ENCODE measurements at regions of chr1 and their contacts with region 1.

Region 1: DNA sequence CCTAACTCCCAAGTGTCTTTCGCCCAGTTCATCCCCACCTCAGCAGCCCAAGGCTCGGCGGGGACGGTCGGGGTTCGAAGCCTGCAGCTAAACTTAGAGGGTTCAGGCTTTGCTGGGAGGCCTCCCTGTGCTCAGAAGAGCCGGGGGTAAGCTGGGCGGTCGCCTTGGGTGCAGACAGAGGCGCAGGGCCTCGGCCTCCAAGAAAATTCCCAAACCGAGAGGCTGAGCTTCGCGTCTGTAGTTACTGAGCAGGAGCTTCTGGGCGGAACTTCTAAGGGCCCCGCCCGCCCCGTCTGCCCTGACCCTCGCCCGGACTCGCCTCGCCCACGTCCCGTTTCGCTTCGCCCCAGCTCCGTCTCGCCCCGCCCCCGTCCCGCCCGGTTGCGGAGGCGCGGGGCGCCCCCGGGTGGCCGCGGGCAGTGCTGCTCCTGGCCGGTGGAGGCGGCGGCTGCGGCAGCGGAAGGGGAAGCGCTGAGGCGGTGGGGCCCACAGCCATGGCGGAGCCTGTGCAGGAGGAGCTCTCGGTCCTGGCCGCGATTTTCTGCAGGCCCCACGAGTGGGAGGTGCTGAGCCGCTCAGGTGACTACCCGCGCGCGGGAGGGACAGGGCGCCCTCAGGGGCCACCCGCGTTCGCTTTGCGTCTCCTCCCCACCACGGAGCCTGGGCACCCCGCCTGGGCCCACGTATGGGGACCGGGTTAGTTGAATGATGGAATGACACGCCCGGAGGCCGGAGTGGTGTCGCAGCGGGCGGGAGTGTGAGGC is at the start of gene RWDD3:
- DNase-seq: peak; percentile 91
- ATAC-seq: peak; percentile 92
- H3K4me3 Mint-ChIP-seq: peak within 1 kb of the TSS; percentile 87
- H3K27ac Mint-ChIP-seq: peak within 1 kb of the TSS; percentile 64
- H3K4me1 Mint-ChIP-seq: peaks cover 18% of the 10 kb centered on the region
- H3K27me3 Mint-ChIP-seq: no peaks in the 10 kb centered on the region; the same call in none of the 2 replicates
- CTCF ChIP-seq: peak; percentile 72
- total RNA-seq, gene RWDD3: 13.7 to 17.4 TPM (median 13.9 TPM) in 3 replicates

Region 2: GRCh38 chr1:95043141-95043980 is 190.6 kb before region 1 on chr1:
- CTCF ChIA-PET with region 1: interaction called, 23 read pairs
- POLR2A ChIA-PET with region 1: no interaction called
- DNase-seq: peak; percentile 87
- ATAC-seq: peak; percentile 95
- H3K4me3 Mint-ChIP-seq: no peak overlapping the region
- H3K27ac Mint-ChIP-seq: no peak overlapping the region
- H3K4me1 Mint-ChIP-seq: no peaks in the 10 kb centered on the region
- H3K27me3 Mint-ChIP-seq: no peaks in the 10 kb centered on the region
- CTCF ChIP-seq: peak; percentile 97

Region 3: GRCh38 chr1:95067062-95067461 is 166.9 kb before region 1 on chr1:
- CTCF ChIA-PET with region 1: no interaction called
- POLR2A ChIA-PET with region 1: no interaction called
- DNase-seq: no peak
- ATAC-seq: no peak
- H3K4me3 Mint-ChIP-seq: no peak overlapping the region
- H3K27ac Mint-ChIP-seq: no peak overlapping the region
- H3K4me1 Mint-ChIP-seq: peaks cover 3% of the 10 kb centered on the region
- H3K27me3 Mint-ChIP-seq: no peaks in the 10 kb centered on the region
- CTCF ChIP-seq: no peak

Region 4: GRCh38 chr1:95084317-95085176 is 149.4 kb before region 1 on chr1:
- CTCF ChIA-PET with region 1: interaction called, 60 read pairs
- POLR2A ChIA-PET with region 1: interaction called, 3 read pairs
- DNase-seq: peak; percentile 28
- ATAC-seq: peak; percentile 75
- H3K4me3 Mint-ChIP-seq: no peak overlapping the region
- H3K27ac Mint-ChIP-seq: no peak overlapping the region
- H3K4me1 Mint-ChIP-seq: peaks cover 29% of the 10 kb centered on the region
- H3K27me3 Mint-ChIP-seq: no peaks in the 10 kb centered on the region
- CTCF ChIP-seq: peak; percentile 12; the same call in 1 of the 2 replicates

Region 5: DNA sequence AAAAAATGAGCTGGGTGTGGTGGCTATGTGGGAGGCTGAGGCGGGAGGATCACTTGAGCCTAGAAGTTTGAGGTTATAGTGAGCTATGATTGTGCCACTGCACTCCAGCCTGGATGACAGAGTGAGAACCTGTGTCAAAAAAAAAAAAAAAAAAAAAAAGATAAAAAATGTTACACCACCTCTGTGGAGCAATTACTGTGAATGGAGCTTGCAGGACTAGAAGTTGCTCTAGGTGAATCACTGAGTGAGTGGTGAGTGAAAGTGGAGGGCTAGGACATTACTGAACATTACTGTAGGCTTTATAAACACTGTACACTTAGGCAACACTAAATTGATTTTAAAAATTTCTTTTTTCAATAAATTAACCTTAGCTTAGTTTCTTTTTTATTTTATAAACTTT is 94.9 kb before region 1 on chr1:
- CTCF ChIA-PET with region 1: interaction called, 11 read pairs
- POLR2A ChIA-PET with region 1: interaction called, 3 read pairs
- DNase-seq: no peak
- ATAC-seq: no peak
- H3K4me3 Mint-ChIP-seq: no peak overlapping the region
- H3K27ac Mint-ChIP-seq: no peak overlapping the region
- H3K4me1 Mint-ChIP-seq: peaks cover 9% of the 10 kb centered on the region
- H3K27me3 Mint-ChIP-seq: no peaks in the 10 kb centered on the region
- CTCF ChIP-seq: no peak

Region 6: GRCh38 chr1:95247607-95248006 is 13.7 kb after region 1 on chr1:
- CTCF ChIA-PET with region 1: interaction called, 24 read pairs
- POLR2A ChIA-PET with region 1: no interaction called
- DNase-seq: no peak
- ATAC-seq: no peak
- H3K4me3 Mint-ChIP-seq: no peak overlapping the region
- H3K27ac Mint-ChIP-seq: no peak overlapping the region
- H3K4me1 Mint-ChIP-seq: peaks cover 18% of the 10 kb centered on the region
- H3K27me3 Mint-ChIP-seq: no peaks in the 10 kb centered on the region
- CTCF ChIP-seq: no peak

Measured in WTC11 (cell line).